Transverse colon (tissue), 4 donors: ENCODE measurements at regions of chr2 and their contacts with region 1.

Region 1: GRCh38 chr2:128366713-128367511 is 48.2 kb upstream of the HS6ST1 start:
- DNase-seq: no peak
- H3K4me3 ChIP-seq: no peak overlapping the region
- H3K27ac ChIP-seq: no peak overlapping the region
- H3K4me1 ChIP-seq: peaks cover 0 to 5% (median 3%) of the 10 kb centered on the region in 4 donors
- H3K27me3 ChIP-seq: no peaks in the 10 kb centered on the region
- CTCF ChIP-seq: no peak
- EP300 ChIP-seq: no peak
- POLR2A ChIP-seq: no peak

Region 2: GRCh38 chr2:128395640-128396499 is 29.0 kb after region 1 on chr2:
- in situ Hi-C with region 1: no loop called
- intact Hi-C with region 1: loop called (anchors 1 kb)
- DNase-seq: peak; percentile 5
- H3K4me3 ChIP-seq: no peak overlapping the region
- H3K27ac ChIP-seq: no peak overlapping the region
- H3K4me1 ChIP-seq: no peaks in the 10 kb centered on the region
- H3K27me3 ChIP-seq: no peaks in the 10 kb centered on the region
- CTCF ChIP-seq: no peak
- EP300 ChIP-seq: no peak
- POLR2A ChIP-seq: no peak

Region 3: DNA sequence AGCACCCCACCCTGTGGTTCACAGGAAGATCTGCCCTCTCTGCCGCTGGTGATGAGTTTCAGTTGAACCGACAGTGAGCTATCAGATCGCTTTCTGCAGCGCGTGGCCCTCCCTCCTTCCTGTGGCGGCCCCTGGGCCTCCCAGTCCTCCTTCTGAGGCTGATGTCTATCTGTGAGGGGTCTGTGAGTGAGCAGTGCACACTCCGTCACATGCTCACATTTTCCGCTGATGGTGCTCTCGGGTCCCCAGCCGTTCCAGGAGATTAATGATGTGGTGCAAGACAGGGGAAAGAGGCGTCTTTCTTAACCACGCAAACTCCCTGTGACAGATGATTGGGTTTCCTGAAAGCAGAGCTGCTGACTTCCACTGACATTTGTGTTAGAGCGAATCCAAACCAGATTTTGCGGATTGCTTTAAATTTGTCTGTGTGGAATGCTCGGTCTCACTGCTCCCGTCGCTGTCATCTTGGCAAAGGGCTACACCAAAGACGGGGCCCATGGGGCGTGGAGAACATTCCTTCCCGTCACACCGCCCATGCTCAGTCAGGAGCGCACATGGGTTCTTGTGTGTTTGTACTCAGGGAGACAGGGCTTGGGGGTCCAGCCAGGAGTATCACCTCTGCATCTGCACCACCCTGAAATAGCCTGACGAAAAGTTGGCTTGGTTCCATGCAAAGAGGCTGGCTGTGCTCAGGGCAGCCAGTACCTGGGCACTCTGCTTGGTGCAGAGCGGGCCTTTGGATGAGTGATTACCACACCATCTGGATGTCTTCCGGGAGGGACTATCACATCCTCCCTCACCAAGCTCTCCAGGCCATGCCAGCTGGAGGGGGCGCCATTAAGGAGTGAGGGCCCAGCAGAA is 106.5 kb after region 1 on chr2:
- in situ Hi-C with region 1: no loop called
- intact Hi-C with region 1: no loop called
- DNase-seq: peak; percentile 17
- H3K4me3 ChIP-seq: peak overlapping the region in 1 of 4 donors; percentile 11
- H3K27ac ChIP-seq: peak overlapping the region in 2 of 4 donors; percentile 1 to 11
- H3K4me1 ChIP-seq: peaks cover 0 to 3% (median 0%) of the 10 kb centered on the region in 4 donors
- H3K27me3 ChIP-seq: no peaks in the 10 kb centered on the region
- CTCF ChIP-seq: no peak
- EP300 ChIP-seq: no peak
- POLR2A ChIP-seq: no peak